ENCODE measurements at regions of chr4 and their contacts with region 1.

Region 1: GRCh38 chr4:95124906-95125504 is 367.2 kb downstream of the BMPR1B start:
- DNase-seq: no peak
- H3K4me3 ChIP-seq: no peak overlapping the region
- H3K27ac ChIP-seq: peak overlapping the region in 1 of 2 donors; percentile 47
- H3K4me1 ChIP-seq: no peaks in the 10 kb centered on the region
- H3K27me3 ChIP-seq: no peaks in the 10 kb centered on the region
- CTCF ChIP-seq: peak in 2 of 3 experiments; percentile 42 to 58

Region 2: GRCh38 chr4:94207469-94208224 is 917.4 kb before region 1 on chr4 and contains the start of gene SMARCAD1:
- intact Hi-C with region 1: loop called (anchors 10 kb)
- DNase-seq: peak; percentile 49 to 95
- H3K4me3 ChIP-seq: peak within 1 kb of the TSS; percentile 73 to 79
- H3K27ac ChIP-seq: peak within 1 kb of the TSS; percentile 88 to 91
- H3K4me1 ChIP-seq: peaks cover 0 to 15% of the 10 kb centered on the region in 2 donors
- H3K27me3 ChIP-seq: no peaks in the 10 kb centered on the region
- CTCF ChIP-seq: no peak
- total RNA-seq, gene SMARCAD1: 3.3 TPM

Measured in ascending aorta (tissue), 2 donors.